HCT116 (cell line): ENCODE measurements at regions of chr5 and their contacts with region 1.

Region 1: DNA sequence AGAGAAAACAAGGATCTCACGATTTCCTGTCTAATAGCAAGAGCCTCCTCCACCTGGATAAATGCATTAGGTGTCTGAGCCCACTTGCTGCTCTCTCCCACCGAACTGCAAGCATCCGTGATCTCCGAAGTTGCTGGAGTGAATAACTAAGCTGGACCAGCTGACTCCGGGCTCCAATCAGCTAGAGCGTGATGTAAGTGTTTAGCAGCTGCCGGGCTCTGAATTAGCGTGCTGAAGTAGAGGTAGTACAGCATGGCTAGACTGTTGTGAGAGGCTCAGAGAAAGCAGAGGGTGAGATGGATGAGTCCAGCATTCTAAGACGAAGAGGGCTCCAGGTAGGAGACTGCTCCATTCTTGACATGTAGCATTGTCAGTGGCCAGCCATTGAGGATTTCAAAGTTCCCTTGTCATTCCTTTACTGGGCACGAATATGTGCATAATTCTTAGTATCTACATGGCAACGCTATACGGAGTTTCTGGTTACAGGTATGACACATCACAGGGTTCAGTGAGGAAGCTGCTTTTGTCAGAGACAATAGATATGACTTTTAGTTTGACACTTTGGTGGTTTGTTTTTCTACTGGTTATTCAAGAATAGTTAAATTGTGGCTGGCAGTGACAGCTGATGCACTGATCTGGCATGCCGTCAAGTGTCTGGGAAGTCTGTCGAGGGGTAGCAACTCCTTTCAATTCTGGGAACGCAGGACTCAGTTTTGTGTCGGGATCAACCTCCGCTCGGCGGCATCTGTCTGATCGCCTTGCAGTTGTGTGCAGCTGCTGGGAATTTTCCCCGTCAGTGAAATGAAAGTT is 232.6 kb downstream of the MAST4 start:
- DNase-seq: no peak
- ATAC-seq: no peak
- H3K4me3 ChIP-seq: no peak overlapping the region
- H3K27ac ChIP-seq: no peak overlapping the region
- H3K4me1 ChIP-seq: no peaks in the 10 kb centered on the region
- H3K27me3 ChIP-seq: peaks cover 28% of the 10 kb centered on the region
- CTCF ChIP-seq: no peak
- POLR2A ChIP-seq: no peak
- RAD21 ChIP-seq: no peak

Region 2: DNA sequence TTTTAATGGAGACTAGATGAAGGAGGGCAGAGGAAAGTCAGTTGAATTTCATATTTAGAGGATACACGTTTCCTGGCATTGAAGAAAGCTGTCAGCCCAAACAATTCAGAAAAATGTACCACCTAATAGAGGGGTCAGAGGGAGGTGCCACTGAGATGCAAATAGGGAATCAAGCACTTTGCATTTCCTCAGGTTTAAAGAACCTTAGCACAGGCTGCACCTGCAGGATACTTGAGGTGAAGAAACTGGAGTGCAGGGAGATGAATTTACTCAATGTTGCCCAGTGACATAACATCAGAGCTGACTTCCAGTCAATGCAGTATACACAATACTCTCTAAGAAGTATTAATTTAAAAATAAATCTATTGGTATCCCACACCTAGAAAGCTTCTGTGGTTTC is 299.6 kb before region 1 on chr5:
- CTCF ChIA-PET with region 1: no interaction called
- POLR2A ChIA-PET with region 1: no interaction called
- RAD21 ChIA-PET with region 1: no interaction called
- intact Hi-C with region 1: no loop called
- DNase-seq: no peak
- ATAC-seq: no peak
- H3K4me3 ChIP-seq: no peak overlapping the region
- H3K27ac ChIP-seq: no peak overlapping the region
- H3K4me1 ChIP-seq: no peaks in the 10 kb centered on the region
- H3K27me3 ChIP-seq: peaks cover 21% of the 10 kb centered on the region
- CTCF ChIP-seq: no peak
- POLR2A ChIP-seq: no peak
- RAD21 ChIP-seq: no peak

Region 3: GRCh38 chr5:66840511-66841013 is 11.8 kb after region 1 on chr5:
- CTCF ChIA-PET with region 1: interaction called, 20 read pairs
- POLR2A ChIA-PET with region 1: no interaction called
- RAD21 ChIA-PET with region 1: no interaction called
- intact Hi-C with region 1: no loop called
- DNase-seq: no peak
- ATAC-seq: no peak
- H3K4me3 ChIP-seq: no peak overlapping the region
- H3K27ac ChIP-seq: no peak overlapping the region
- H3K4me1 ChIP-seq: no peaks in the 10 kb centered on the region
- H3K27me3 ChIP-seq: peaks cover 17% of the 10 kb centered on the region; the same call in 1 of the 2 replicates
- CTCF ChIP-seq: no peak
- POLR2A ChIP-seq: no peak
- RAD21 ChIP-seq: no peak